ENCODE measurements at regions of chr10 and their contacts with region 1.

Region 1: GRCh38 chr10:82796510-82796909 is 921.5 kb downstream of the NRG3 start:
- DNase-seq: no peak
- ATAC-seq: no peak
- H3K4me3 ChIP-seq: no peak overlapping the region
- H3K27ac ChIP-seq: no peak overlapping the region
- H3K4me1 ChIP-seq: no peaks in the 10 kb centered on the region
- H3K27me3 ChIP-seq: no peaks in the 10 kb centered on the region
- CTCF ChIP-seq: no peak
- POLR2A ChIP-seq: no peak
- RAD21 ChIP-seq: no peak

Region 2: DNA sequence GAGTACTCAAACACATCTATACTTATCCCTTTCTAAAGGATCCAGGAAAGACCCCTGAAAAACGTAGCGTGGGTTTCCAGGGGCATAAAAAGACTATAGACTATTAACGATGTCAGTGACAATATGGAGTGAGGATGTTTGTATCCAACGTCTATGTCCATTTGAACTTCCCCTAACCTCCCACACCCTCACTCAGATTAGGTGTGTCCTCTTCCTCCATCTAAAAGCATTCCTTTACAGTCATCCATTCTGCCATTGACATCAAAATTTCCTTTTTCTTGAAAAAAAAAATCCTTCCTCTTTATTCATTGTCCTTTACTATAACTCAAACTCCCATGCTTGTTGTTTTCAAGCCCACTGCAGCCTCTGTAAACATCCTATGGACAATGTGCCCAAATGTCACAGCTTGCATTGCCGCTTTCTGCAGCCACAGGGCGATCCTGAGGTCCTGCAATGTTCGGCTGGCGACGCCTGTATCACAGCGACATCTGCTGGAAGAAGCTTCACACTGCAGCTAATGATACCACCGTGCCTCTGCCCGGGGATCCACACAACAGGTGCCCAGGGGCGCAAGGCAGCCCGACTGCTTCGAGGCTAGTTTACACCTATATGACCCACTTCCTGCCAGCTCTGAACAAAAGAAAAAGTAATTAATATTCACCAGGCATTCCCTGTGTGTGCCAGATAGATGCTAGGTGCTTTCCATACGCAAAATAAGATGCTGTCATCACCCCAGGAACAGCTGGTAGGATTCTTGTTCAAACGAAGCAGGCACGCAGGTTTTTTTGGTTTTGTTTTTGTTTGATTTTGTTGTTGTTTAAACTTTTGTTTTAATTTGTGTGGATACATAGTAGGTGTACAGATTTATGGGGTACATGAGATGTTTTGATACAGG is 1074.9 kb after region 1 on chr10:
- CTCF ChIA-PET with region 1: no interaction called
- POLR2A ChIA-PET with region 1: no interaction called
- RAD21 ChIA-PET with region 1: no interaction called
- intact Hi-C with region 1: loop called (anchors 1 kb)
- DNase-seq: peak; percentile 27
- ATAC-seq: peak; percentile 97
- H3K4me3 ChIP-seq: no peak overlapping the region
- H3K27ac ChIP-seq: no peak overlapping the region
- H3K4me1 ChIP-seq: no peaks in the 10 kb centered on the region
- H3K27me3 ChIP-seq: no peaks in the 10 kb centered on the region
- CTCF ChIP-seq: peak; percentile 75 to 93 (median 91)
- POLR2A ChIP-seq: no peak
- RAD21 ChIP-seq: peak; percentile 82

Region 3: DNA sequence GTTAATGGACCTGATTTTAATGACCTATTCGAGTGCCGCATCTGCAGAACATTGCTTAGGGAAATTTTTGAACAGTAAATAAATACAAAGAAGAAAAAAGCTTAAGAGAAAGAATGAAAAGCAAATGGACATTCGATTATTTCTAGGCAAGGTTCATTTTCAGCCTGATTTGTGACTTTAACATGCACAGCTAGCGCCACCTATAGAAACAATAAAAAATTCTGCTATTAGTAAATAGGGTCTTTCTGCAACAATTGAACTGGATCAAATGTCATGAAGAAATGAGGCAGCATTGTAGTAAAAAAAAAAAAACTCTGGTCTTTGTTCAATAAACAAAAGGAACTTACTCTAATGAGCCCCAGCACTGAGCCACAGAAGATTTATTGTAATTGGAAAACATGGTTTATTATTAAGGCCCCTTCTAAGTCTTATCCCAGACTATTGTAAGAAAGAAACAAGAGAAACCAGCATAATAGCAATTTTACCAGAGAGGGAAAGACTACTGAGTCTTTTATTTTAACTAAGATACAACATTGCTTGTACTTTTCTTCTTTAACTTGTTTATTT is 1301.4 kb after region 1 on chr10:
- CTCF ChIA-PET with region 1: no interaction called
- POLR2A ChIA-PET with region 1: no interaction called
- RAD21 ChIA-PET with region 1: no interaction called
- intact Hi-C with region 1: loop called (anchors 5 kb)
- DNase-seq: no peak
- ATAC-seq: no peak; the same call in 1 of the 2 replicates
- H3K4me3 ChIP-seq: no peak overlapping the region
- H3K27ac ChIP-seq: no peak overlapping the region
- H3K4me1 ChIP-seq: no peaks in the 10 kb centered on the region
- H3K27me3 ChIP-seq: peaks cover 2% of the 10 kb centered on the region; the same call in 1 of the 2 replicates
- CTCF ChIP-seq: peak; percentile 32 to 77 (median 51); a peak in 5 of 6 replicates
- POLR2A ChIP-seq: no peak
- RAD21 ChIP-seq: peak; percentile 55

Measured in HCT116 (cell line).